ENCODE measurements at regions of chr12 and their contacts with region 1.

Region 1: GRCh38 chr12:119069147-119069642 is 87.9 kb downstream of the SRRM4 start:
- DNase-seq: no peak
- H3K4me3 ChIP-seq: no peak overlapping the region
- H3K27ac ChIP-seq: no peak overlapping the region
- H3K4me1 ChIP-seq: peaks cover 0 to 14% (median under 1%) of the 10 kb centered on the region in 4 experiments; a peak in 1 of 7 replicates
- H3K27me3 ChIP-seq: no peaks in the 10 kb centered on the region; a peak in 2 of 7 replicates
- CTCF ChIP-seq: peak in 1 of 3 experiments; percentile 16; a peak in 1 of 4 replicates
- EP300 ChIP-seq: no peak
- POLR2A ChIP-seq: no peak
- RAD21 ChIP-seq: no peak; a peak in 1 of 4 replicates

Region 2: GRCh38 chr12:119052001-119052400 is 17.2 kb before region 1 on chr12:
- CTCF ChIA-PET with region 1: no interaction called
- POLR2A ChIA-PET with region 1: no interaction called
- DNase-seq: no peak
- H3K4me3 ChIP-seq: no peak overlapping the region
- H3K27ac ChIP-seq: no peak overlapping the region
- H3K4me1 ChIP-seq: no peaks in the 10 kb centered on the region
- H3K27me3 ChIP-seq: no peaks in the 10 kb centered on the region; a peak in 1 of 7 replicates
- CTCF ChIP-seq: no peak
- EP300 ChIP-seq: no peak
- POLR2A ChIP-seq: no peak
- RAD21 ChIP-seq: no peak

Region 3: GRCh38 chr12:119082496-119082895 is 13.3 kb after region 1 on chr12:
- CTCF ChIA-PET with region 1: interaction called, 10 read pairs
- POLR2A ChIA-PET with region 1: no interaction called
- DNase-seq: no peak
- H3K4me3 ChIP-seq: no peak overlapping the region
- H3K27ac ChIP-seq: no peak overlapping the region
- H3K4me1 ChIP-seq: peaks cover under 1 to 6% (median 4%) of the 10 kb centered on the region in 4 experiments; a peak in 6 of 7 replicates
- H3K27me3 ChIP-seq: no peaks in the 10 kb centered on the region; a peak in 1 of 7 replicates
- CTCF ChIP-seq: no peak
- EP300 ChIP-seq: no peak
- POLR2A ChIP-seq: no peak
- RAD21 ChIP-seq: no peak